IMR-90 (cell line): ENCODE measurements at regions of chr11 and their contacts with region 1.

Region 1: DNA sequence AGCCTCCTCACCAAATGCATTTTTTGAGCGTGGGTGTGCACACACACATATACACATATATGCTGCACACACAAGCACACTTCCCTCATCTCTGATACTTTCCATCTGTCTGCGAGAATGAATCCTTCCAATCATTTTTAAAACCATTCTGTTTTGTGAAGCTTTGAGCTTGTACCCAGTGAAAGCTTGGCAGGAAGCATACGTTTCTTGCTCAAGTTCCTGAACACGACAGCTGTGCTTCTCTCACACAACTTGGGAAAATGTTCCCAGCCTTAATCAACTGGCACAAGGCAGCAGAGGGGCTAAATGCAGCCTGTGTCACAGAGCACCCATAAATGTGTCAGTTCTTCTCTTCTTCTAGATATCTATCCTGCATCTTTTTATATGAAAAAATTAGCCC is 524.0 kb upstream of the KIRREL3 start:
- DNase-seq: no peak
- ATAC-seq: no peak
- H3K4me3 ChIP-seq: no peak overlapping the region
- H3K27ac ChIP-seq: no peak overlapping the region
- H3K4me1 ChIP-seq: peaks cover 2% of the 10 kb centered on the region
- H3K27me3 ChIP-seq: no peaks in the 10 kb centered on the region
- CTCF ChIP-seq: no peak
- POLR2A ChIP-seq: no peak
- RAD21 ChIP-seq: no peak

Region 2: GRCh38 chr11:126904520-126904919 is 620.1 kb before region 1 on chr11:
- CTCF ChIA-PET with region 1: no interaction called
- POLR2A ChIA-PET with region 1: no interaction called
- dilution Hi-C with region 1: no loop called
- in situ Hi-C with region 1: no loop called
- intact Hi-C with region 1: no loop called
- DNase-seq: no peak
- ATAC-seq: no peak
- H3K4me3 ChIP-seq: no peak overlapping the region
- H3K27ac ChIP-seq: no peak overlapping the region
- H3K4me1 ChIP-seq: no peaks in the 10 kb centered on the region
- H3K27me3 ChIP-seq: no peaks in the 10 kb centered on the region
- CTCF ChIP-seq: no peak
- POLR2A ChIP-seq: no peak
- RAD21 ChIP-seq: no peak

Region 3: GRCh38 chr11:127454856-127455255 is 69.8 kb before region 1 on chr11:
- CTCF ChIA-PET with region 1: no interaction called
- POLR2A ChIA-PET with region 1: no interaction called
- dilution Hi-C with region 1: no loop called
- in situ Hi-C with region 1: no loop called
- intact Hi-C with region 1: no loop called
- DNase-seq: no peak
- ATAC-seq: no peak
- H3K4me3 ChIP-seq: no peak overlapping the region
- H3K27ac ChIP-seq: no peak overlapping the region
- H3K4me1 ChIP-seq: no peaks in the 10 kb centered on the region
- H3K27me3 ChIP-seq: no peaks in the 10 kb centered on the region; the same call in none of the 2 replicates
- CTCF ChIP-seq: no peak
- POLR2A ChIP-seq: no peak
- RAD21 ChIP-seq: no peak

Region 4: GRCh38 chr11:127640561-127641451 is 116.2 kb after region 1 on chr11:
- CTCF ChIA-PET with region 1: no interaction called
- POLR2A ChIA-PET with region 1: no interaction called
- dilution Hi-C with region 1: no loop called
- in situ Hi-C with region 1: no loop called
- intact Hi-C with region 1: no loop called
- DNase-seq: peak; percentile 57
- ATAC-seq: peak; percentile 54; the same call in 1 of the 2 replicates
- H3K4me3 ChIP-seq: no peak overlapping the region
- H3K27ac ChIP-seq: no peak overlapping the region
- H3K4me1 ChIP-seq: peaks cover 2% of the 10 kb centered on the region; the same call in 1 of the 2 replicates
- H3K27me3 ChIP-seq: no peaks in the 10 kb centered on the region; the same call in 1 of the 2 replicates
- CTCF ChIP-seq: no peak
- POLR2A ChIP-seq: no peak
- RAD21 ChIP-seq: no peak

Region 5: DNA sequence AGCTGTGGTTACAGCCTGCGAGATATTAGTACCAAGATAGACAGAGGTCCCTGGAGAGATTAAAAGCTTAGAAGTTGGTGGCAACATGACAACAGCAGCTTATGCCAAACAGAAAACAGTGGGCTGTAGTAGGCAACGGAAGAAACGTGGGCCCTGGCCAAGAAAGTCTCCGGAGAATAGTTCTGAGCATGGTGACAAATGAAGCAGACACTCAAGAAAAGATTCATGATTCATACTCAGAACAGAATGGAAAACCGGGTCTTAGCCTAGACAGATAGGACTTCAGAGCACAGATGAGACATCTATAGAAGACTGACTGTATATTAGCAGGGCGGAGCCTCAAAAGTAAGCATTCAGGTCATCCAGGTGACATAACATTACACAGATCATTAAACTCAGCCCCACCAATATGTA is 335.3 kb after region 1 on chr11:
- CTCF ChIA-PET with region 1: interaction called, 13 read pairs
- POLR2A ChIA-PET with region 1: no interaction called
- dilution Hi-C with region 1: no loop called
- in situ Hi-C with region 1: no loop called
- intact Hi-C with region 1: no loop called
- DNase-seq: no peak
- ATAC-seq: no peak
- H3K4me3 ChIP-seq: no peak overlapping the region
- H3K27ac ChIP-seq: no peak overlapping the region
- H3K4me1 ChIP-seq: no peaks in the 10 kb centered on the region
- H3K27me3 ChIP-seq: no peaks in the 10 kb centered on the region
- CTCF ChIP-seq: no peak
- POLR2A ChIP-seq: no peak
- RAD21 ChIP-seq: no peak